Endothelial cell of umbilical vein (primary cell): ENCODE measurements at regions of chr12 and their contacts with region 1.

Region 1: DNA sequence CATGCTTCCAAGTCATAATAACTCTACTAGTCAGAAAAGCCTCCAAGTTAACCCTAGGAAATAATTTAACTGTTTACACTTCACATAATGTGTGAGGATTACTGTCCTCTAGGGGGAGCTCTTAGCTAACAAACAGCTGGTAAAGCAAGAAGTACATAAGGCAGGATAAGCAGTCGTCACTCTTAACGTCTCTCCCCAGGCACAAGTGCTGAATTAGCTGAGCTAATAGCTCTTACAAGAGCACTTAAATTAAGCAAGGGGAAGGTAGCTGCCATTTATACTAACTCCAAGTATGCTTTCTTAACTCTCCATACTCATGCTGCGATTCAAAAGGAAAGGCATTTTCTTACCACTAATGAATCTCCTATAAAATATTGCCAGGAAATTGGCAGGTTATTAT is 79.3 kb upstream of the TSPAN11 start:
- DNase-seq: peak; percentile 59
- H3K4me3 ChIP-seq: no peak overlapping the region
- H3K27ac ChIP-seq: no peak overlapping the region
- H3K4me1 ChIP-seq: peaks cover 6% of the 10 kb centered on the region
- H3K27me3 ChIP-seq: peaks cover 3 to 5% of the 10 kb centered on the region in 2 experiments
- CTCF ChIP-seq: peak; percentile 45 to 46
- POLR2A ChIP-seq: no peak

Region 2: GRCh38 chr12:29073628-29074239 is 1773.5 kb before region 1 on chr12:
- CTCF ChIA-PET with region 1: no interaction called
- POLR2A ChIA-PET with region 1: no interaction called
- dilution Hi-C with region 1: no loop called
- intact Hi-C with region 1: loop called (anchors 1 kb)
- DNase-seq: peak; percentile 67
- H3K4me3 ChIP-seq: no peak overlapping the region
- H3K27ac ChIP-seq: no peak overlapping the region
- H3K4me1 ChIP-seq: no peaks in the 10 kb centered on the region
- H3K27me3 ChIP-seq: peaks cover 2 to 12% of the 10 kb centered on the region in 2 experiments
- CTCF ChIP-seq: peak; percentile 51 to 55
- POLR2A ChIP-seq: no peak

Region 3: GRCh38 chr12:30822385-30823155 is 24.7 kb before region 1 on chr12:
- CTCF ChIA-PET with region 1: interaction called, 11 read pairs
- POLR2A ChIA-PET with region 1: no interaction called
- dilution Hi-C with region 1: no loop called
- intact Hi-C with region 1: no loop called
- DNase-seq: peak; percentile 56
- H3K4me3 ChIP-seq: peak overlapping the region in 2 of 3 experiments; percentile 34 to 38
- H3K27ac ChIP-seq: no peak overlapping the region
- H3K4me1 ChIP-seq: peaks cover 6% of the 10 kb centered on the region
- H3K27me3 ChIP-seq: peaks cover 9 to 10% of the 10 kb centered on the region in 2 experiments
- CTCF ChIP-seq: peak in 1 of 2 donors; percentile 10
- POLR2A ChIP-seq: no peak

Region 4: DNA sequence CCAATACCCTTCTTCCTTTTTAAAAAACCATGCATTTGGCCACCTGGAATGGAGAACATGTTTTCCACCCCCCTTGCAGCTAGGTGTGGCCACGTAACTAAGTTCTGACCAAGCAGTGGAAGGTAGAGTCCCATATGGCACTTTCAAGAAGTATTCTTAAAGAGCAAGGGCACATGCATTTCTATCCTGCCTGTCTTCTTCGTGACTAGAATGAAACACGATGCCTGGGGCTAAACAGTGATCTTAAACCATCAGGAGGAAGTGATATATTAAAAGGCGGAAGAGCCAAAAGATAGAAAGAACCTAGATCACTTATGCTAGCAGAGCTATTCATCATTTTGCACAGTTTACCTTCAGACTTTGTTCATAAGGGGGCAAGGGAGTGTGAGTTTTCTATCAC is 210.4 kb after region 1 on chr12:
- CTCF ChIA-PET with region 1: interaction called, 18 read pairs
- POLR2A ChIA-PET with region 1: no interaction called
- dilution Hi-C with region 1: no loop called
- intact Hi-C with region 1: loop called (anchors 1 kb)
- DNase-seq: no peak
- H3K4me3 ChIP-seq: no peak overlapping the region
- H3K27ac ChIP-seq: no peak overlapping the region
- H3K4me1 ChIP-seq: no peaks in the 10 kb centered on the region
- H3K27me3 ChIP-seq: no peaks in the 10 kb centered on the region
- CTCF ChIP-seq: no peak
- POLR2A ChIP-seq: no peak

Region 5: DNA sequence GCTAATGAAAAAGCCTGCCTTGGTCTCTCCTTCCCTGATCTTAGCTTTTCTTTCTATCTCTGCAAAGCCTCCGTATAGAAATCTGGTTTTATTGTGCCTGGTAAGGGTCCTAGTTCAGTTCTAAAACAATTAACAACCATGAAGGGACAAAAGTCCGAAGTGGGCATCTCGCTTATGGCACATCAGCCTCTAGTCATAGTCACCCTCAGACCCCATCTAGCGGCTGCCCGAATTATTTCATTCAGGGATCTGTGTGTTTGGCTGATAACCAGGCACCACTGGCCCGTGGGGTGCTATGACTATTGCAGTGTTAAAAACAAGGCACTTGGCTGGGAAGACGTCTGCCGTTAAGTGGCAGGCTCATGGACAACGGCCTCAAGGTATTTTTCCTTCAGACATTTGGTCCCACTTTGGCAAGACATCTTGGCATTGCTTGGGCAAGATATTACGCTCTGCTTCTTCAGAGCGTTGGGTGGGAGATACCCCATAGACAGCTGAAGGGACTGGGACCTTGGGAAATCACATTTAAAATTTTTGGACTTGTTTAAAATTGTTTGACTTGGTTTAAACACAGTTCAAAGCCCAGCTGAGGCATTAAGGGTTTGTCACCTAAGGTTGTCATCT is 391.6 kb after region 1 on chr12:
- CTCF ChIA-PET with region 1: interaction called, 123 read pairs
- POLR2A ChIA-PET with region 1: no interaction called
- dilution Hi-C with region 1: loop called (anchors 25 kb)
- intact Hi-C with region 1: loop called (anchors 1 kb)
- DNase-seq: peak; percentile 67
- H3K4me3 ChIP-seq: no peak overlapping the region
- H3K27ac ChIP-seq: no peak overlapping the region
- H3K4me1 ChIP-seq: no peaks in the 10 kb centered on the region
- H3K27me3 ChIP-seq: peaks cover 11 to 16% of the 10 kb centered on the region in 2 experiments
- CTCF ChIP-seq: peak; percentile 68 to 75
- POLR2A ChIP-seq: no peak

Region 6: GRCh38 chr12:31267966-31268365 is 420.7 kb after region 1 on chr12:
- CTCF ChIA-PET with region 1: interaction called, 52 read pairs
- POLR2A ChIA-PET with region 1: no interaction called
- dilution Hi-C with region 1: no loop called
- intact Hi-C with region 1: loop called (anchors 1 kb)
- DNase-seq: no peak
- H3K4me3 ChIP-seq: no peak overlapping the region
- H3K27ac ChIP-seq: no peak overlapping the region
- H3K4me1 ChIP-seq: no peaks in the 10 kb centered on the region
- H3K27me3 ChIP-seq: no peaks in the 10 kb centered on the region
- CTCF ChIP-seq: no peak
- POLR2A ChIP-seq: no peak